ENCODE measurements at regions of chr15 and their contacts with region 1.

Region 1: DNA sequence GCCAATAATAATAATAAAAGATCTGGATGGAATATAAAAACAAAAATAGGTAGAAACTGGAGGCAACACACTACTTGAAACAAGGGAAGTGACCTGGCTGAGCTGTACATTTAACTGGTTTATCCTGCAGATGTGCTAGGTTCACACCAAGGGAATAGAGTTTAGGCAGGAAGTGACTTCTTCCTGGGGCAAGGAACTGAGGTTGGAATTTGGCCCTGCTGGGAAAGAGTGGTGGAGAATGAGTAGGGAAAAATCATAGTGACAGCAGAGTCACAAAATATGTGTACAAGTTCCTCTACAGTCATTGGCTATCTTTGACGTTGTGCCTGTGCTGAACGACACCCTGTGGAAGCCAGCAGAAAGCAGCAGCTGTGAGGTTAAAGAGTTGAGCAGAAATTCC is 44.1 kb downstream of the ARHGAP11B start:
- DNase-seq: no peak
- H3K4me3 ChIP-seq: no peak overlapping the region
- H3K27ac ChIP-seq: no peak overlapping the region
- H3K4me1 ChIP-seq: no peaks in the 10 kb centered on the region
- H3K27me3 ChIP-seq: no peaks in the 10 kb centered on the region
- CTCF ChIP-seq: no peak
- POLR2A ChIP-seq: no peak

Region 2: GRCh38 chr15:31136016-31136415 is 466.0 kb after region 1 on chr15:
- intact Hi-C with region 1: loop called (anchors 10 kb)
- DNase-seq: peak; percentile 9
- H3K4me3 ChIP-seq: no peak overlapping the region
- H3K27ac ChIP-seq: no peak overlapping the region
- H3K4me1 ChIP-seq: no peaks in the 10 kb centered on the region
- H3K27me3 ChIP-seq: no peaks in the 10 kb centered on the region
- CTCF ChIP-seq: no peak
- POLR2A ChIP-seq: no peak